Caco-2 (cell line): ENCODE measurements at regions of chr11 and their contacts with region 1.

Region 1: DNA sequence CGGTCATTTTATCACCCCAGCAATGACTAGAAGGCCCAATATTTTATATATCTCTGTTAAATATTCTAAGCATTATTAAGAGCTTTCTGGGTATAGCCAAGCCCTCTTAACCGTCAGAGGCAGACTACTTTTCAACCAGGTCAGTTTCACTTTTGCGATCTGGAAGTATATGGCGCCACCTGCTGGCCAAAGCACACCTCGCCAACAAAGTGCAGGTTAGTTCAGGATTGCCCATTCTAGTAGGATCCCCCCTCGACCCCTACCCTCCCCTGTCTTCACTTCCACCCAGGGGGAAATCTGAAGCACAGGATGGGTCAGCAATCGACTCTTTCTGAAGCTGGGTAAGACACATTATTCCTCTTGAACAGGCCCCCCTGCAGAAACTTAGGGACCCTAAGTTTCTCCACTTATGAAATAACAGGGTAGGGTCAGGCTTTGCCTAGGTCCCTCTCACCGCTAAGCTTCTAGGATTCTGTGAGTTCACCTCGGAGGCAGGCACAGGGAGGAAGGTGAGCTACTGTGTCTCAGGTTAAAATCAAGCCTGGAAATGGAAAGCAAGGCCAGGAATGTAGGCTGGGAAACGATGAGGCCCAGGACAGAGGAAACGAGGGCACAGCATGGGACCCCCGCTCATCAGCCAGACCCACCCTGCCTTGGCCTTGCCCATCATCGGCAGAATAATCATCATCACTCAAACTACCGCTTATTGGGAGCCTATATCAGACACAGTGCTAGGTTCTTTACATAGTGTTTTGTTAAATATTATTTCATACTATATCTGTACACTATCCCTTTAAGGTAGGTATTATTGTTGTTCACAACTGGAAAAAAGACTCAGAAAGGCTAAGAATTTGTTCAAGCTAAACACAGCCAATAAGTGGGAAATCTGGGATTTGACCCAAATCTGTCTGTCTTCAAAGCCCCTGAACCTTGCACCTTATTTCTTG is 35.6 kb downstream of the KCNJ1 start:
- DNase-seq: peak; percentile 82 to 88
- H3K4me3 ChIP-seq: no peak overlapping the region
- H3K4me3 Mint-ChIP-seq: no peak overlapping the region
- H3K27ac Mint-ChIP-seq: no peak overlapping the region
- H3K4me1 ChIP-seq: peaks cover 12% of the 10 kb centered on the region
- H3K4me1 Mint-ChIP-seq: peaks cover 8% of the 10 kb centered on the region
- H3K27me3 ChIP-seq: no peaks in the 10 kb centered on the region
- H3K27me3 Mint-ChIP-seq: peaks cover 8% of the 10 kb centered on the region
- CTCF ChIP-seq: peak; percentile 97 to 98

Region 2: GRCh38 chr11:128157423-128158298 is 673.8 kb before region 1 on chr11:
- CTCF ChIA-PET with region 1: interaction called, 9 read pairs
- POLR2A ChIA-PET with region 1: no interaction called
- intact Hi-C with region 1: loop called (anchors 1 kb)
- DNase-seq: peak; percentile 65 to 80
- H3K4me3 ChIP-seq: no peak overlapping the region
- H3K4me3 Mint-ChIP-seq: peak overlapping the region; percentile 24
- H3K27ac Mint-ChIP-seq: no peak overlapping the region
- H3K4me1 ChIP-seq: no peaks in the 10 kb centered on the region
- H3K4me1 Mint-ChIP-seq: no peaks in the 10 kb centered on the region
- H3K27me3 ChIP-seq: peaks cover 2% of the 10 kb centered on the region; the same call in 1 of the 2 replicates
- H3K27me3 Mint-ChIP-seq: peaks cover 23% of the 10 kb centered on the region
- CTCF ChIP-seq: peak; percentile 86 to 99

Region 3: DNA sequence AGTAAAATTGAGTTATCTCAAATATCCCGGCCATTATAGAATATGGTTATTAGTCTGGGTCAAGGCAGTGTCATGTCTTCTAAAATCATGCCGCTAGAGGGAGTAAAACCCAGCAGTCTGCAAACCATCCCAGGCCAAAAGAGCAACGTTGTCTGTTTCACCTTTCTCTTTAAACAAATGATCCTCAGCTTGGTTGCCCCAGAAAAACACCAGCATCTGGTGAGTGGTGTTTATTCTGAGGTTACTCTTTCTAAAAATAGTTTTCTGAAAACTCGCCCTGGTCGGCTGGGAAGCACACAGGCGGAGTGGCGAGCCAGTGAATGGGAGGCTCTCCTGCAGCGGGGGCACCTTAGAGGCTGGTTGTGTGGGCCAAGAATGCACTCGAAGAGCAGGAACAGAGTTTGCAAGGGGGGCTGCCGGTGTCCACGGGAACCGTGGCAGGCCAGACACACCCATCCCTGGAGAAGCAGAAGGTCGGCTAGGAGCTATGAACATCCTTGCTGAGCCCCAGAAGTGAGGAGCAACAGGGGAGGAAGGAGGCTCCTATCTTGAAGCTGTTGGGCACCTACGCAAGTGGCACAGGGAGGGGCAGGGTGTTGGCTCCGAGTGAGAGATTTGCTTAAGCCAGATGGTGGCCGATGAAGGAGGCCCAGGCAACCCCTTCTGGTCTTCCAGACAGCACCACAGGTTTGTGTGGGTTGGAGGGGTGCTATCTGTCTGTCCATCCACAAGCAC is 541.2 kb before region 1 on chr11:
- CTCF ChIA-PET with region 1: no interaction called
- POLR2A ChIA-PET with region 1: no interaction called
- intact Hi-C with region 1: loop called (anchors 1 kb)
- DNase-seq: peak in 1 of 2 experiments; percentile 78
- H3K4me3 ChIP-seq: no peak overlapping the region
- H3K4me3 Mint-ChIP-seq: no peak overlapping the region
- H3K27ac Mint-ChIP-seq: no peak overlapping the region
- H3K4me1 ChIP-seq: no peaks in the 10 kb centered on the region
- H3K4me1 Mint-ChIP-seq: no peaks in the 10 kb centered on the region
- H3K27me3 ChIP-seq: no peaks in the 10 kb centered on the region; the same call in 1 of the 2 replicates
- H3K27me3 Mint-ChIP-seq: peaks cover 14% of the 10 kb centered on the region
- CTCF ChIP-seq: peak; percentile 88 to 95

Region 4: DNA sequence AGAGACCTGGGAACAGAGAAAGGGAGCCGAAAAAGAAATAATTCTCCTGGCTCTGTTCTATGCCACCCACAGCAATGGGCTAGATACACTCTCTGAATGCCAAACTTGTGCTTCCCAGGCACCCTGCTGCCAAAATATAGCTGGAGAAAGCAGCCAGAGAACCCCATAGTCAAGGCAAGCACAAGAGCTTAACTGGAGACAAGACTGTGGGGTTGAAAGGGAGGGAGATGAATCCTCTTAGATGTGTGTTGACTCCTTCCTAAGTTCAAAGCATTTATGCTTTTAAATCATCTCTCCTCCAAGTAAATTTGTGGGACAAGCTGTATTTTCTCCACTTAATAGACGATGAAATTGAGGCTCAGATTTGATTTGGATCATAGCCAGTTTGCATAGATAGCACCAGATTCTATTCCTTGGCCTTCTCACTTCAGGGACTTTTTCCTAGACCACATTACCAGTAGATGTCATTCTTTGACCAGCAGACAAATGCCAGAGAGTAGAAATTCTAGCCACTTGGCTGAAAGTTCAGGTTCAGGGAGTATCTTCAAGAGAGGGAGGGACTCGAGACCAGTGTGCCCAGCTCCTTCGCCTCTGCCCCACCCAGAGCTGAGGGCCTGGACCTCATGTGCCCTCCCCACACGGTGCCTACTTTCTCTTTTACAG is 227.6 kb before region 1 on chr11:
- CTCF ChIA-PET with region 1: no interaction called
- POLR2A ChIA-PET with region 1: no interaction called
- intact Hi-C with region 1: loop called (anchors 1 kb)
- DNase-seq: no peak
- H3K4me3 ChIP-seq: no peak overlapping the region
- H3K4me3 Mint-ChIP-seq: no peak overlapping the region
- H3K27ac Mint-ChIP-seq: no peak overlapping the region
- H3K4me1 ChIP-seq: no peaks in the 10 kb centered on the region
- H3K4me1 Mint-ChIP-seq: no peaks in the 10 kb centered on the region
- H3K27me3 ChIP-seq: no peaks in the 10 kb centered on the region
- H3K27me3 Mint-ChIP-seq: peaks cover 30% of the 10 kb centered on the region
- CTCF ChIP-seq: no peak

Region 5: GRCh38 chr11:128776424-128777284 is 54.8 kb before region 1 on chr11:
- CTCF ChIA-PET with region 1: no interaction called
- POLR2A ChIA-PET with region 1: no interaction called
- intact Hi-C with region 1: loop called (anchors 2 kb)
- DNase-seq: peak in 1 of 2 experiments; percentile 60
- H3K4me3 ChIP-seq: no peak overlapping the region
- H3K4me3 Mint-ChIP-seq: no peak overlapping the region
- H3K27ac Mint-ChIP-seq: no peak overlapping the region
- H3K4me1 ChIP-seq: no peaks in the 10 kb centered on the region
- H3K4me1 Mint-ChIP-seq: no peaks in the 10 kb centered on the region
- H3K27me3 ChIP-seq: no peaks in the 10 kb centered on the region
- H3K27me3 Mint-ChIP-seq: peaks cover 41% of the 10 kb centered on the region
- CTCF ChIP-seq: peak in 1 of 2 experiments; percentile 60

Region 6: GRCh38 chr11:128814856-128815705 is 16.4 kb before region 1 on chr11:
- CTCF ChIA-PET with region 1: no interaction called
- POLR2A ChIA-PET with region 1: no interaction called
- intact Hi-C with region 1: loop called (anchors 1 kb)
- DNase-seq: peak; percentile 86 to 89
- H3K4me3 ChIP-seq: no peak overlapping the region
- H3K4me3 Mint-ChIP-seq: peak overlapping the region; percentile 16
- H3K27ac Mint-ChIP-seq: no peak overlapping the region
- H3K4me1 ChIP-seq: no peaks in the 10 kb centered on the region
- H3K4me1 Mint-ChIP-seq: peaks cover 7% of the 10 kb centered on the region
- H3K27me3 ChIP-seq: no peaks in the 10 kb centered on the region
- H3K27me3 Mint-ChIP-seq: peaks cover 16% of the 10 kb centered on the region
- CTCF ChIP-seq: no peak

Region 7: GRCh38 chr11:128868841-128869580 is 37.6 kb after region 1 on chr11:
- CTCF ChIA-PET with region 1: no interaction called
- POLR2A ChIA-PET with region 1: no interaction called
- intact Hi-C with region 1: no loop called
- DNase-seq: no peak
- H3K4me3 ChIP-seq: no peak overlapping the region
- H3K4me3 Mint-ChIP-seq: no peak overlapping the region
- H3K27ac Mint-ChIP-seq: no peak overlapping the region
- H3K4me1 ChIP-seq: no peaks in the 10 kb centered on the region
- H3K4me1 Mint-ChIP-seq: no peaks in the 10 kb centered on the region
- H3K27me3 ChIP-seq: peaks cover 2% of the 10 kb centered on the region; the same call in 1 of the 2 replicates
- H3K27me3 Mint-ChIP-seq: peaks cover 24% of the 10 kb centered on the region
- CTCF ChIP-seq: no peak

Region 8: DNA sequence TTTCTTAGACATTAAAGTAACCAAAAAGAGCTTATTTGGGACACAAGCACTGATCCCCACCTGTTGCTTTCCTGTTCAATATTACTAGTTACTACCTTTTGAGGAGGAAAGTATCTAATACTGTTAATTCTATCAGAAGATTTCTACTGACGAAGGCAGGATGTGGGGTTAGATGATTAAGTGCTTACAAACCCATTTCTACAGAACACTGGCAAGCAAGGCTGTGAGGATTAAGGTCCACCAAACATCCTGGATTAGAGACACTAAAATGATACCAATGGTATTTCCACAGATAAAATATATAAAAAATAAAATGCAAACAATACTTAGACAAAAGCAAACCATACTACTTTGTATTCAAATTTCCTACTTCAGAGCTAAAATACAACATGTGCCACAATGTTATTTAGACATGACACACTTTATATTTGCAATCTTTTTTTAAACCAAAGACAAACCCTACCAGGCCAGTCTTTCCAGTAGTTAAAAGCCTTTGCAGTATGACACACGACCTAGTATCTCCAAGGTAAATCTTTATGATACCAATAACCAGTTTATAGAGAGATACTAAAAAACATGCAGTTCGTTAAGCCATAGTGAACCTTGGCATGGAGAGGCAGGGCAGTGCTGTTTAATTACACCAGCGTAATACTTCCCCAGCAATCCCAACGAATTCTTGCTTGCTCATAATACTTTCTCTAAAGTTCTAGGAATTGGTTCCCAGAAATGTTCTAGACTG is 182.5 kb after region 1 on chr11:
- CTCF ChIA-PET with region 1: no interaction called
- POLR2A ChIA-PET with region 1: no interaction called
- intact Hi-C with region 1: no loop called
- DNase-seq: peak in 1 of 2 experiments; percentile 25
- H3K4me3 ChIP-seq: no peak overlapping the region
- H3K4me3 Mint-ChIP-seq: no peak overlapping the region
- H3K27ac Mint-ChIP-seq: no peak overlapping the region
- H3K4me1 ChIP-seq: peaks cover 7% of the 10 kb centered on the region; the same call in 1 of the 2 replicates
- H3K4me1 Mint-ChIP-seq: peaks cover 7% of the 10 kb centered on the region
- H3K27me3 ChIP-seq: no peaks in the 10 kb centered on the region
- H3K27me3 Mint-ChIP-seq: no peaks in the 10 kb centered on the region
- CTCF ChIP-seq: no peak